OCI-LY7 (cell line): ENCODE measurements at regions of chr13 and their contacts with region 1.

Region 1: DNA sequence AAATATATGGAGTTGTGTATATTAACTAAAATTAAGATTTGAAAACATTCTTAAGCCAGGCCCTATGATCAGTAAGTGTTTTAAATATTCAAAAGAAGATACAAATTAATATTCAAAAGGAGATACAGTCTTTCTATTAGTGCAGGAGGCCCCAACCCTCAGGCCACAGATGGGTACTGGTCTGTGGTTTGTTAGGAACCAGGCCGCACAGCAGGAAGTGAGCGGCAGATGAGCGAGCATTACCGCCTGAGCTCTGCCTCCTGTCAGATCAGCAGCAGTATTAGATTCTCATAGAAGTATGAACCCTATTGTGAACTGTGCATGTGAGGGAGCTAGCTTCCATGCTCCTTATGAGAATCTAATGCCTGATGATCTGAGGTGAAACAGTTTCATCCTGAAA is 232.9 kb downstream of the FOXO1 start:
- DNase-seq: peak; percentile 86
- H3K4me3 ChIP-seq: no peak overlapping the region
- H3K27ac ChIP-seq: peak overlapping the region; percentile 98
- H3K4me1 ChIP-seq: peaks cover 91% of the 10 kb centered on the region
- CTCF ChIP-seq: no peak

Region 2: GRCh38 chr13:40406405-40407180 is 27.0 kb before region 1 on chr13:
- CTCF ChIA-PET with region 1: no interaction called
- POLR2A ChIA-PET with region 1: interaction called, 15 read pairs
- intact Hi-C with region 1: no loop called
- DNase-seq: no peak
- H3K4me3 ChIP-seq: no peak overlapping the region
- H3K27ac ChIP-seq: no peak overlapping the region
- H3K4me1 ChIP-seq: peaks cover 16% of the 10 kb centered on the region
- CTCF ChIP-seq: no peak

Region 3: DNA sequence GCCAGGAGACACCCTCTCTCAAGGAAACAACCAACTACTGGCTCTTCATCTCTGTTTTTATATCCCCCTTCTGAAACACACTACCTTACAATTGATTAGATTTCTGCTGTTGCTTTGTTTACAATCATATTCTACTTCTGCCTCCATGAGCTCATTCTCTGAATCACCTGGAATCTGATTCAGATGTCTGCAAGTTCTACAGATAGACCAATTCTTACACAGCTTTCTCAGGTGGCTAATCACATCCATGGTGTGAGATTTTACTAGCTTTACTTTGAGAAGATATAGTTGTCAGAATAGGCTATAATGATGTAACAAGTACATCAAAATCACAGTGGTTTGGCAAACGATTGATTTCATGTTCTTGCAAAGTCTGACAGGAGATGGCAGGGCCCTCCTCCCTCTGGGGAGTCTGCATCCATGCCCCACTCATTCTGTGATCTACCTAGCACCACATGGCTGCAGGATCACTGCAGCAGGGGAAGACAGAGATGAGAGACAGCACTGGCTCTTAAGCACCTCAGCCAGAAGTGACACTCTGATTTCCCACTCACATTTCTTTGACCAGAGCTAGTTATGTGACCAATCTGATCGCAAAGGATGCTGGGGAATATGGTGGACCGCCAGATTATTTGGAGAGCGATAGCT is 10.9 kb before region 1 on chr13:
- CTCF ChIA-PET with region 1: interaction called, 4 read pairs
- POLR2A ChIA-PET with region 1: interaction called, 12 read pairs
- intact Hi-C with region 1: no loop called
- DNase-seq: no peak
- H3K4me3 ChIP-seq: no peak overlapping the region
- H3K27ac ChIP-seq: no peak overlapping the region
- H3K4me1 ChIP-seq: peaks cover 24% of the 10 kb centered on the region
- CTCF ChIP-seq: no peak

Region 4: DNA sequence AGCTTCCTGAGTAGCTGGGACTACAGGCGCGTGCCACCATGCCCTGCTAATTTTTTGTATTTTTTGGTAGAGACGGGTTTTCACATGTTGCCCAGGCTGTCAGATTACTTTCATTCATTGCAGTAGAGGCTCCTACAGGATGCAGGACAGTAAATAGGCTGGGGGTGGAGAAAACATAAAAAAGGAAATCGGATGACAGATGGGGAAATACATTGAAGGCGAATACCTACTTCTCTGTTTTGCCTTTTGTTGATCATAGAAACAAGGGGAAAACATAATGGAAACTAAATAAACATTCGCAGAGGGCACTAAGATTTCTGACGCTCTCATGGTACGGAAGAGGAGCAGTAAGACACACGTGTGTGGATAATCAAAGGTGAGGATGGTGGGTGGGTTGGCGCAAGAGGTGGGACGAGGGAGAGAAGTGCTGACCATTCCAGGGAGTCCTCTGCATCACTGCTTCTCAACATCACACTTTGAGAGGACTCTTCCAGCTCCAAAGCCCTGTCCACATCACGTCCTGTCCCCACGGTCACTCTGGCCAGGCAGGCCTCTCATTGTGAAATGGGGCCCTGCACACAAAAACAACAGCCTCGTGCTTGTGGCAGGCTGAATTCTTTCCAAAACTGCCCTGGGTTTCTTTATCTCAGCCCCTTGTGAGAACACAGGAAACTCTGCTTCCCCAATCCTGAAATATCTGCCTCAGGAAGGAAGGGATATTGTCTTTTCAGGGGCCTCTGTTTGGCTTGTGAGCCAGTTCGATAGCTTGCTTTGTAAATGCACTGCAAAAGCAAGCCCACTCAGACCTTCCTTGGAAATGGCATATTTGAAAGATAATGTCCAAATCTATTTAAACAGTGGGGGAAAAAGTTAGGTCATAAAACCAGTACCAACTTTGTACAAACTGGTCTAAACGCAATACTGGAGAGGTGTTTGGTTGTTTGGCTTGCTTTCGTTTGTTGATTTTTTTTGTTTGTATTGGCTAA is 44.3 kb after region 1 on chr13:
- CTCF ChIA-PET with region 1: interaction called, 3 read pairs
- POLR2A ChIA-PET with region 1: interaction called, 14 read pairs
- intact Hi-C with region 1: loop called (anchors 5 kb)
- DNase-seq: peak; percentile 54
- H3K4me3 ChIP-seq: peak overlapping the region; percentile 67
- H3K27ac ChIP-seq: peak overlapping the region; percentile 96
- H3K4me1 ChIP-seq: peaks cover 83% of the 10 kb centered on the region
- CTCF ChIP-seq: no peak

Region 5: DNA sequence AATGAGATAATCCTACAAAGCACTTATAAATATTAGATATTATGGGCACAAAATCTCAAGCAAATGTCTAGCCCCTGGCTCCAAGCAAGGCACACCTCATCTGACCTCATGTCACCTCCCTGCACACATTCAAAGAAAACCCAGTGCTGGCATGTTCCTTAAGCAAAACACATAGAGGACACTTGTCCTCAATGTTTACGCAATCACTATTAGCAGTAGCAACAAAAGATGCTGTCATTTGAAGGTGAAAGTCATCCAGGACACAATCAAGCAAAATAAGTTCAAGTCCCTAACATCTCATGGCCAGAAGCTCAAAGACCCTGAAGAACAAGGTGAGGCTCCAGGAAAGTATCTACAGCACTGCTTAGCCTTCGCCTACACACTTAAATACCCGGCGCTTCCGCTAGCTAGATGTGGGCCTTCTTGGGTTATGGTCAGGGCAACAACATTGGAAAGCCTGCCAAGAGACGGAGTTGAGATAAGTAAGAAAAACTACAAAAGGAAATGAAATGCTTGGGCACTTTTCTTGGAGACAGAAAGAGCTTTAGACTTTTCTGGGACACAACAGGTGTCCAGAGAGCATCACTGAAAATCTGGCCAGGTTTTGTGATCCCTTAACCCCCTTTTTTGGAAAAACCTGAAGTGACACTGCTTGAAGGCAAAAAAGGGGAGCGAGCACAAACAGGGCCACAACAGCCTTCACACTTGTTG is 147.1 kb after region 1 on chr13:
- CTCF ChIA-PET with region 1: interaction called, 3 read pairs
- POLR2A ChIA-PET with region 1: interaction called, 3 read pairs
- intact Hi-C with region 1: loop called (anchors 5 kb)
- DNase-seq: peak; percentile 80
- H3K4me3 ChIP-seq: peak overlapping the region; percentile 55
- H3K27ac ChIP-seq: peak overlapping the region; percentile 99
- H3K4me1 ChIP-seq: peaks cover 99% of the 10 kb centered on the region
- CTCF ChIP-seq: no peak

Region 6: DNA sequence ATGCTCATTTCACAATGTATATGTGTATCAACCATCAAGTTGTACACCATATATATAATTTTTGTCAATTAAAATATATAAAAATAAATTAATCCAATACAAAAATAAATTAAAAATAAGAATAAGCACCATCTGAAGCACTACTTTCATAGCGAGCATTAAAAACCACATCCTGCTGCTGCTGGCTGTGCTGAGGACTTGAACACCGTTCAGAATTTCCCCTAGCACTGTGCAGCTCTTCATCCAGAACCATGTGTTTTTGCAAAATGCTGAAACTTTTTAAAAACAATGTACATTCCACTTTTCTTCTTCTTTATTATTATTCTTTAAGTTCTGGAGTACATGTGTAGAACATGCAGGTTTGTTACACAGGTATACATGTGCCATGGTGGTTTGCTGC is 272.9 kb after region 1 on chr13:
- CTCF ChIA-PET with region 1: no interaction called
- POLR2A ChIA-PET with region 1: no interaction called
- intact Hi-C with region 1: no loop called
- DNase-seq: peak; percentile 60
- H3K4me3 ChIP-seq: no peak overlapping the region
- H3K27ac ChIP-seq: peak overlapping the region; percentile 54
- H3K4me1 ChIP-seq: peaks cover 20% of the 10 kb centered on the region
- CTCF ChIP-seq: no peak